ENCODE measurements at regions of chrX and their contacts with region 1.

Region 1: GRCh38 chrX:103214870-103215424 is at the start of gene BEX4:
- DNase-seq: peak; percentile 88
- ATAC-seq: peak; percentile 97
- H3K4me3 Mint-ChIP-seq: peak within 1 kb of the TSS; percentile 76
- H3K27ac Mint-ChIP-seq: peak within 1 kb of the TSS; percentile 83
- H3K4me1 Mint-ChIP-seq: peaks cover 8% of the 10 kb centered on the region
- H3K27me3 Mint-ChIP-seq: peaks cover 2% of the 10 kb centered on the region
- CTCF ChIP-seq: no peak
- total RNA-seq, gene BEX4: 9.7 to 13.1 TPM

Region 2: DNA sequence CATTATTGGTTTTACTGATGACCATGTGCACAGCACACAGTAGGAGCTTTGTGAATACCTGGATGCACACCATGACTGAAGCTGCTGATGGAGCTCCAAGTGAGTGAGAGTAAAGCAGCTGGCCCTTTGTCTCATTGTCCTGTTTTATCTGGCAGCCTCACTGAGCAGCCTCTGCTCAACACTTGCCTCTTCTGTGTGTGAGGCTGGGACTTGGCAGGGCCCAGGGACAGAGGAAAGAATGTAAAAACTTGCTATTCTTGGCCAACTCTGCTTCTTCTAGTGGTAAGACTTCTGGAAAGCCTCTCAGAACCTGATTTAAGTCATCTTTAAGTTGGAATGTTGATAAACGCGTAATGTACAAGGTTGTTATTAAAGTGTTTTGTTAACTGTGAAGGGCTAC is 212.4 kb before region 1 on chrX:
- CTCF ChIA-PET with region 1: no interaction called
- POLR2A ChIA-PET with region 1: no interaction called
- intact Hi-C with region 1: no loop called
- DNase-seq: no peak
- ATAC-seq: no peak
- H3K4me3 Mint-ChIP-seq: no peak overlapping the region
- H3K27ac Mint-ChIP-seq: no peak overlapping the region
- H3K4me1 Mint-ChIP-seq: no peaks in the 10 kb centered on the region
- H3K27me3 Mint-ChIP-seq: no peaks in the 10 kb centered on the region
- CTCF ChIP-seq: no peak

Region 3: DNA sequence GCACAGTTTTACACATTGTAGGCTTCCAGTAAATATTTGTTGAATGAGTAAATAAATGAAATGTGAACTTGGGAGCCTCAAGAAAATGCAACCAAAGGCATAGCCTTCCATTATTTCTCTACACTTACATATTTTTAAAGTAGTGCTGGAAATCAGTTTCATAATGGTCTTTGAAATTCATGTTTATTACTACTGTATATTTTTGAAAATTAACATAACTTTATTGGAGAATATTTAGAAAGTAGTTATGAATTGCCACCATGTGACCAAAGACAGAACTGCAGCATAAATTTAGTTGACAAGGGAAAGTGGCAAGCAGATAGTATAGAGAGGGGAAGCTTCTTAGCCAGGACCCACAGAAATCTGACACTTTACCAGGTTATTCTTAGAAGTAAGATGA is 33.6 kb after region 1 on chrX:
- CTCF ChIA-PET with region 1: interaction called, 6 read pairs
- POLR2A ChIA-PET with region 1: interaction called, 3 read pairs
- intact Hi-C with region 1: loop called (anchors 5 kb)
- DNase-seq: peak; percentile 11
- ATAC-seq: no peak
- H3K4me3 Mint-ChIP-seq: no peak overlapping the region
- H3K27ac Mint-ChIP-seq: no peak overlapping the region
- H3K4me1 Mint-ChIP-seq: peaks cover 4% of the 10 kb centered on the region
- H3K27me3 Mint-ChIP-seq: no peaks in the 10 kb centered on the region
- CTCF ChIP-seq: peak; percentile 20

Region 4: DNA sequence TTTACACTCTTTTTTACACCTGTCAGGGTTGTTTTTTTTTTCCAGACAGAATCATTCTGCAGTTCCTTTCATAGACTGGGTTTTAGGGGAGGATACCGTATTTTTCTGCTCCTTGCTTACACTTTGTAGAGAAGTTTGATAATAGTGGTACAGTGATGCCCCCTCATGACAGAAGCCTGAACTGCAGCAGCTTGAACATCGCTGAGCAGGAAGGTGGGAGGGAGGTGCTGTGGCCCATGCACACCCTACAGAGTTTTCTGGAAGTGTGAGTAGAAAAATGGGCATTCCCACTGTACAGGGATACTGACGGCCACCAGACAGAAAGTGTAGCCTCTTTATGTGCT is 249.8 kb after region 1 on chrX:
- CTCF ChIA-PET with region 1: interaction called, 5 read pairs
- POLR2A ChIA-PET with region 1: no interaction called
- intact Hi-C with region 1: loop called (anchors 5 kb)
- DNase-seq: peak; percentile 87
- ATAC-seq: peak; percentile 96
- H3K4me3 Mint-ChIP-seq: peak overlapping the region; percentile 80
- H3K27ac Mint-ChIP-seq: peak overlapping the region; percentile 49
- H3K4me1 Mint-ChIP-seq: peaks cover 11% of the 10 kb centered on the region
- H3K27me3 Mint-ChIP-seq: no peaks in the 10 kb centered on the region
- CTCF ChIP-seq: peak; percentile 59

Region 5: DNA sequence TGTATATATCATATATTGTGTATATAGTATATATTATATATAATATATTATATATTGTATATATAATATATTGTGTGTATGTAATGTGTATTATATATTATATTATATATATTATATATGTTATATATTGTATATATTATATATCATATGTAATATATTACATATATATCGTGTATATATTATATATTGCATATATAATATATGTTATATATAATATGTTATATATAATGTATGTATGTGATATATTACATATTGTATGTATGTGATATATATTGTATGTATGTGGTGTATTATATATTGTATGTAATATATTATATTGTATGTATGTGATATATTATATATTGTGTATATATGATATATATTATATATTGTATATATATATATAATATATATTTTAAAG is 273.8 kb after region 1 on chrX:
- CTCF ChIA-PET with region 1: interaction called, 11 read pairs
- POLR2A ChIA-PET with region 1: no interaction called
- intact Hi-C with region 1: no loop called
- DNase-seq: no peak
- ATAC-seq: no peak
- H3K4me3 Mint-ChIP-seq: no peak overlapping the region
- H3K27ac Mint-ChIP-seq: no peak overlapping the region
- H3K4me1 Mint-ChIP-seq: no peaks in the 10 kb centered on the region
- H3K27me3 Mint-ChIP-seq: no peaks in the 10 kb centered on the region
- CTCF ChIP-seq: no peak

Measured in activated CD8-positive, alpha-beta T cell treated with anti-CD3 and anti-CD28 coated beads for 36 hours (primary cell).